Esophagus muscularis mucosa (tissue), 4 donors: ENCODE measurements at regions of chr19 and their contacts with region 1.

Region 1: GRCh38 chr19:3700221-3701032 is at the start of gene PIP5K1C:
- DNase-seq: peak; percentile 94
- H3K4me3 ChIP-seq: peak within 1 kb of the TSS; percentile 93 to 99 (median 96)
- H3K27ac ChIP-seq: peak within 1 kb of the TSS; percentile 93 to 99 (median 96)
- H3K4me1 ChIP-seq: peaks cover 21 to 48% (median 40%) of the 10 kb centered on the region in 4 donors
- H3K27me3 ChIP-seq: peaks cover 0 to 4% (median 0%) of the 10 kb centered on the region in 4 donors
- CTCF ChIP-seq: peak; percentile 82 to 99 (median 86)
- EP300 ChIP-seq: no peak
- POLR2A ChIP-seq: no peak
- total RNA-seq, gene PIP5K1C: 73.2 to 180 (median 99.9) TPM

Region 2: DNA sequence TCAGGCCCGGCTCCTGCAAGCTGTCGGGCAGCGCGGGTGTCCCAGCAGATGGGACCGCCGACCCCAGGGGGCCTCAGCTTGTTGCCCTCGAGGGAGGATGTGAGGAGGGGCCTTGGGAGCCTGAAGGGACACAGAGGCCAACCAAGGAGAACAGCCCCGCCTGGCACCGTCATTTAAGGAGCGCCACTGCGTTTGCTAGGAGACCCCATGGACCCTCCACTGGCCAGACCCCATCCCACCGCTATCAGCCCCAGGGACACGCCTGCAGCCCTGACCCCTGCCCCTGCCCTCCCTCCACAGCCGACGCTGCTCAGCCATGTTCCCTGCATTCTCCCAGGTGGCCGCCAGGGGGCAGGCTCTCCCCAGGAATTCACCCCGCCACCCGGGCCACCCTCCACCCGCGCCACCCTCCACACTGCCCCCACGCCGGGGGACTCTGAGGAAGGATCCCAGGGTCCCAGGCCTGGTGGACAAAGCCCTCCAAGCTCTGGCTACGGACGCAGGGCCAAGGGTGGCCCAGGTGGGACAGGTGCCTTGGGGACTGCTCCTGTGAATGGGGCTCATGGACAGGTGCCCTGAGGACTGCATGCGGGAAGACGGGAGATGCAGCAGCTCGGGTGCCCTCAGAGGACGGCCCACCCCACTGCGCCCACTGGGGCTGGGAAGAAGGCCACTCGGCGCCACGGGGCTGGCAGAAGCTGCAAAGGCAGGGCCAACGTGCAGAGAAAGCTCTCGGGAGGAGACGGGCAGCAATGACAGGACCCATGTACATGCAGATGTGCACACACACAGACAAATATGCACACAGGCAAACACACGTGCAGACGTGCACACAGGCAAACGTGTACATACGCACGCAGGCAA is 34.5 kb before region 1 on chr19:
- intact Hi-C with region 1: loop called (anchors 1 kb)
- DNase-seq: no peak
- H3K4me3 ChIP-seq: no peak overlapping the region
- H3K27ac ChIP-seq: peak overlapping the region; percentile 50 to 100 (median 54)
- H3K4me1 ChIP-seq: peaks cover 43 to 60% (median 56%) of the 10 kb centered on the region in 4 donors
- H3K27me3 ChIP-seq: no peaks in the 10 kb centered on the region
- CTCF ChIP-seq: peak; percentile 98 to 99 (median 98)
- EP300 ChIP-seq: no peak
- POLR2A ChIP-seq: no peak